IMR-90 (cell line): ENCODE measurements at regions of chr1 and their contacts with region 1.

Region 1: GRCh38 chr1:198937231-198938031 is 298.6 kb downstream of the PTPRC start:
- DNase-seq: peak; percentile 95
- ATAC-seq: peak; percentile 90
- H3K4me3 ChIP-seq: peak overlapping the region; percentile 89
- H3K27ac ChIP-seq: peak overlapping the region; percentile 92
- H3K4me1 ChIP-seq: no peaks in the 10 kb centered on the region; the same call in 1 of the 2 replicates
- H3K27me3 ChIP-seq: no peaks in the 10 kb centered on the region
- CTCF ChIP-seq: no peak
- POLR2A ChIP-seq: peak; percentile 95
- RAD21 ChIP-seq: 0 out of 2 replicates have a peak, but pooled peaks have one; percentile 18

Region 2: GRCh38 chr1:198534548-198535418 is 402.6 kb before region 1 on chr1:
- CTCF ChIA-PET with region 1: no interaction called
- POLR2A ChIA-PET with region 1: no interaction called
- dilution Hi-C with region 1: no loop called
- in situ Hi-C with region 1: no loop called
- intact Hi-C with region 1: no loop called
- DNase-seq: no peak
- ATAC-seq: no peak
- H3K4me3 ChIP-seq: no peak overlapping the region
- H3K27ac ChIP-seq: no peak overlapping the region
- H3K4me1 ChIP-seq: no peaks in the 10 kb centered on the region; the same call in 1 of the 2 replicates
- H3K27me3 ChIP-seq: no peaks in the 10 kb centered on the region
- CTCF ChIP-seq: no peak
- POLR2A ChIP-seq: no peak
- RAD21 ChIP-seq: no peak

Region 3: DNA sequence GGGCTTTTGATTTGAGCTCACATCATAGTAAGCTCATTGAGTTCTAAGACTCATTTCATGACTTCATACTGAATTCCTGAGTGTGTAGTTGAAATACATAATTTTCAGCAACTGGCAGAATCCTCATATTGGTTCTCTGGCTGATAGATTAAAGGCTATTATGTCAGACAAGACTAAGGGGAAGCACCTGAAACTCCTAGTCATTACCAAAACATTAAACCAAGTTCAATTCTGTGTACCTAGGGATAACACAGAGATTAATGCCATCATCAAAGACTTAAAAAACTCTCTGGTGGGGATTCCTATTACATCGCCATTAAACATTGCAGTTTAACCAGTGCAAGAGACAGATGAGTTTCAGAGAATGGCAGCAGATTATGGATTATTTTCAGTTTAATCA is 40.5 kb after region 1 on chr1:
- CTCF ChIA-PET with region 1: no interaction called
- POLR2A ChIA-PET with region 1: no interaction called
- dilution Hi-C with region 1: no loop called
- in situ Hi-C with region 1: no loop called
- intact Hi-C with region 1: loop called (anchors 5 kb)
- DNase-seq: no peak
- ATAC-seq: no peak
- H3K4me3 ChIP-seq: no peak overlapping the region
- H3K27ac ChIP-seq: no peak overlapping the region
- H3K4me1 ChIP-seq: no peaks in the 10 kb centered on the region
- H3K27me3 ChIP-seq: no peaks in the 10 kb centered on the region
- CTCF ChIP-seq: no peak
- POLR2A ChIP-seq: no peak
- RAD21 ChIP-seq: no peak

Region 4: GRCh38 chr1:199113265-199113869 is 175.9 kb after region 1 on chr1:
- CTCF ChIA-PET with region 1: interaction called, 3 read pairs
- POLR2A ChIA-PET with region 1: no interaction called
- dilution Hi-C with region 1: no loop called
- in situ Hi-C with region 1: no loop called
- intact Hi-C with region 1: loop called (anchors 2 kb)
- DNase-seq: peak; percentile 82
- ATAC-seq: peak; percentile 73; the same call in 1 of the 2 replicates
- H3K4me3 ChIP-seq: no peak overlapping the region
- H3K27ac ChIP-seq: no peak overlapping the region
- H3K4me1 ChIP-seq: no peaks in the 10 kb centered on the region
- H3K27me3 ChIP-seq: no peaks in the 10 kb centered on the region
- CTCF ChIP-seq: peak; percentile 87
- POLR2A ChIP-seq: no peak
- RAD21 ChIP-seq: peak; percentile 90

Region 5: DNA sequence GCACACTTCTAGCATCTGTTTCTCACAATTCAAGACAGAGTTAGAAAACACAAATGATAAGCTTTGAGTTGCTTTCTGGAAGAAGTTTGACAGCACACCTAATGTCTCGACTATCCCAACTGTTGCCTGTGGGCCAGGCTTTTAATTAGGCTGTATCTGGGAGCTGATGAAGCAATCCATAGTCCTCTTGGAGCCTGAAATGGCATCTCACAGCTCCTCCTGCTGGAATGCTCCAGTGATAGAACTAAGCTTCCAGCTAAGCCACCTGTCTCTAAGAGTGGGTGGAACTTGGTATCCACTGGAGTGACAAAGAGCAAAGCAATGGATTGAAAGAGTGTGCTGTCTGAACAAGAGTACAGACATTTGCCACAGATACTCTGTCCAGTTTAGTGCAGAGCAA is 484.8 kb after region 1 on chr1:
- CTCF ChIA-PET with region 1: no interaction called
- POLR2A ChIA-PET with region 1: no interaction called
- dilution Hi-C with region 1: no loop called
- in situ Hi-C with region 1: no loop called
- intact Hi-C with region 1: loop called (anchors 5 kb)
- DNase-seq: peak; percentile 55
- ATAC-seq: peak; percentile 82
- H3K4me3 ChIP-seq: no peak overlapping the region
- H3K27ac ChIP-seq: no peak overlapping the region
- H3K4me1 ChIP-seq: peaks cover 2% of the 10 kb centered on the region; the same call in 1 of the 2 replicates
- H3K27me3 ChIP-seq: no peaks in the 10 kb centered on the region
- CTCF ChIP-seq: peak; percentile 56
- POLR2A ChIP-seq: no peak
- RAD21 ChIP-seq: peak; percentile 56